Naive thymus-derived CD4-positive, alpha-beta T cell (primary cell): ENCODE measurements at regions of chr11 and their contacts with region 1.

Region 1: GRCh38 chr11:46121724-46122477 is 647 bp upstream of the PHF21A start:
- DNase-seq: peak in 7 of 9 donors; percentile 20 to 85 (median 80)
- ATAC-seq: peak; percentile 69
- H3K4me3 ChIP-seq: peak overlapping the region; percentile 53
- H3K4me3 Mint-ChIP-seq: peak overlapping the region; percentile 83 to 95 (median 93)
- H3K27ac ChIP-seq: peak overlapping the region; percentile 80
- H3K27ac Mint-ChIP-seq: peak overlapping the region; percentile 87 to 98 (median 95)
- H3K4me1 ChIP-seq: peaks cover 18 to 22% of the 10 kb centered on the region in 2 donors
- H3K4me1 Mint-ChIP-seq: peaks cover 24 to 39% (median 35%) of the 10 kb centered on the region in 7 donors
- H3K27me3 ChIP-seq: no peaks in the 10 kb centered on the region
- H3K27me3 Mint-ChIP-seq: no peaks in the 10 kb centered on the region

Region 2: GRCh38 chr11:45804761-45805304 is 317.1 kb before region 1 on chr11 and contains the start of gene SLC35C1:
- CTCF ChIA-PET with region 1: no interaction called
- POLR2A ChIA-PET with region 1: no interaction called
- intact Hi-C with region 1: loop called (anchors 2 to 10 kb)
- DNase-seq: peak; percentile 89 to 97 (median 93)
- ATAC-seq: peak; percentile 99
- H3K4me3 ChIP-seq: peak within 1 kb of the TSS; percentile 95
- H3K4me3 Mint-ChIP-seq: peak within 1 kb of the TSS; percentile 86 to 99 (median 92)
- H3K27ac ChIP-seq: peak within 1 kb of the TSS; percentile 87
- H3K27ac Mint-ChIP-seq: peak within 1 kb of the TSS; percentile 61 to 94 (median 91)
- H3K4me1 ChIP-seq: peaks cover 27 to 29% of the 10 kb centered on the region in 2 donors
- H3K4me1 Mint-ChIP-seq: peaks cover 31 to 43% (median 40%) of the 10 kb centered on the region in 7 donors
- H3K27me3 ChIP-seq: no peaks in the 10 kb centered on the region
- H3K27me3 Mint-ChIP-seq: no peaks in the 10 kb centered on the region
- total RNA-seq, gene SLC35C1: 7.9 to 22.8 (median 14.2) TPM

Region 3: DNA sequence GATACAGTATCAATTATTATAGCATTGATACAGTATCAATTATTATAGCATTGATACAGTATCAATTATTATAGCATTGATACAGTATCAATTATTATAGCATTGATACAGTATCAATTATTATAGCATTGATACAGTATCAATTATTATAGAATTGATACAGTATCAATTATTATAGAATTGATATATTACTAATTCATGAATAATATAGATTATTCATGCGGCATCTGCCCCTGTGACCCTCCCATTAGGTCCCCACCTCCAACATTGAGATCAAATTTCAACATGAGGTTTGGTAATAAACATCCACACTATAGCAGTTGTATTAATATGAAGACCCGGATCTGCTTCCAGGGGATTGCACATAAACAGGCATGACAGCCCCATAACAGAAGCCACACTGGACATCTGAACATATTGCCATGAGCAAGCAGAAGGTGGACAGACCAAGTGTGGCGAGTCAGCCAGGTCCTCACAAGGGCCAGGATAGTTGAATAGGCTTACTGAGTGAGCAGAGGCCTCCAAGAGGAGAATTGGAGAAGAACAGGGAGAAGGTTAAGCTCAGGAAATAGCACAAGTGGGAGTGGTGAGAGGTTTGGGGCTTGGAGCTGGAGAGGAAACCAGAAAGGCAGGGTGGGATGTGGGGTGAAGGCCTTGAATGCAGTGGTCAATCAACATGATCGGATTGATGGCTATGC is 306.3 kb before region 1 on chr11:
- CTCF ChIA-PET with region 1: no interaction called
- POLR2A ChIA-PET with region 1: no interaction called
- intact Hi-C with region 1: no loop called
- DNase-seq: no peak
- ATAC-seq: no peak
- H3K4me3 ChIP-seq: no peak overlapping the region
- H3K4me3 Mint-ChIP-seq: no peak overlapping the region
- H3K27ac ChIP-seq: no peak overlapping the region
- H3K27ac Mint-ChIP-seq: no peak overlapping the region
- H3K4me1 ChIP-seq: no peaks in the 10 kb centered on the region
- H3K4me1 Mint-ChIP-seq: peaks cover 0 to 4% (median 0%) of the 10 kb centered on the region in 7 donors
- H3K27me3 ChIP-seq: no peaks in the 10 kb centered on the region
- H3K27me3 Mint-ChIP-seq: peaks cover 0 to 4% (median 0%) of the 10 kb centered on the region in 5 donors

Region 4: DNA sequence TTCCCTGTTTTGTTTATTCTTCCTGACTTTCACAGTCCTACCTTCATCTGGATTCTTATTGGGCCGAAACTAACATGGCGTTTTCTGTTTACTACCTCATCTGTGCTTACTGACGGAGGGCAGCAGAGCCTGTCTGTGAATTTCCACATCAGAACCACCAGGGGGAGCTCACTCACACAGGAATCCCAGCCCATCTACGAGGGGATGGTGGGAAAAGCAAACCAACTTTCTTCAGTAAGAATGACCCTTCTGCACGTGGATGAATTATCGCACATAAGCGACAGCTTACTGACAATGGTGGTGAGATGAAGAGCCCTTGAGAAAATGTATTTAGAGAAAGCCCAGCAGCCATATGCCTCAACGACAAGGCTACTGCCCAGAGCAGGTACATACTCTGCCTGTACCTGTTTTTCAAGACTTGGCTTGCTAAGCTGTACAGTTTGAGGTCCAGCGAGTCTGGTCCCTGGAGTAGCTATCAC is 157.0 kb before region 1 on chr11:
- CTCF ChIA-PET with region 1: no interaction called
- POLR2A ChIA-PET with region 1: no interaction called
- intact Hi-C with region 1: loop called in 1 of 2 experiments (anchors 2 kb)
- DNase-seq: peak; percentile 11 to 68 (median 61)
- ATAC-seq: peak; percentile 96
- H3K4me3 ChIP-seq: no peak overlapping the region
- H3K4me3 Mint-ChIP-seq: no peak overlapping the region
- H3K27ac ChIP-seq: no peak overlapping the region
- H3K27ac Mint-ChIP-seq: no peak overlapping the region
- H3K4me1 ChIP-seq: no peaks in the 10 kb centered on the region
- H3K4me1 Mint-ChIP-seq: no peaks in the 10 kb centered on the region
- H3K27me3 ChIP-seq: no peaks in the 10 kb centered on the region
- H3K27me3 Mint-ChIP-seq: no peaks in the 10 kb centered on the region

Region 5: DNA sequence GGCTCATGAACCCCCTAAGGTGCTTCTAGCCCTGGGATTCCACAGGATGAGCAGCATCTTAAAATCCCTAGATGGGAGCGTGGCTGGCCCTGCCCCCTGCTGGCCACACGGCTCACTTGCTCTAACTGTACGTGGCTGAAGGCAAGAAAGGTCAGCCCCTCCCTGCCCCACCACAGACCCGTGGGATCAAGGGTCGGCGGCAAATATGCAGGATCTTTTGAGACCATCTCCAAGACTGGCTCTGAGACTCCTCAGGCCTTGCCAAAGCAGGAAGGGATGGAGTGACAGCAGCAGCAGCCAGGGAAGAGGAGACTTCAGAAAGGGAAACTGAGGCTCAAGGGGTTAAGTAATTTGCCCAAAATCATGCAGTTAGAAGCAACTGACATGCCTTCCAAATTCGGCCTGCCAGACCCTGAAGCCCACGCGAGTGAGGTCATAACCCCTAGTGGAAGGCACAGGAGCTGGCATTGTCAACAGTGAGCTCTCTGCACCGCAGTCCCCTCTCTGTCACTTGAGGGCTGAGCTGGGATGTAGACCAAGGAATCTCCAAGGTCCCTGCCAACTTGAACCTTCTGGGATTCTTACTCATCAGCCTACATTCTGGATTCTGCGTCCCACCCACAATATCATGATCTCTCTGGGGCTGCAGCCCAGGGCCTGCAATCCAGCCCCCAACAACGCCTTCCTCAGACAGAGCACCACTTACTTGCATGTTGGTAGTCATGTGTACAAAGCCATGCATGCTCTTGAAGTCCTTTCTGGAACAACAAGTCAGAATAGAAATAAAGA is 186.9 kb after region 1 on chr11:
- CTCF ChIA-PET with region 1: no interaction called
- POLR2A ChIA-PET with region 1: interaction called, 3 read pairs
- intact Hi-C with region 1: loop called (anchors 2 to 10 kb)
- DNase-seq: peak; percentile 29 to 66 (median 53)
- ATAC-seq: peak; percentile 78
- H3K4me3 ChIP-seq: no peak overlapping the region
- H3K4me3 Mint-ChIP-seq: peak overlapping the region in 2 of 10 donors; percentile 53 to 56
- H3K27ac ChIP-seq: no peak overlapping the region
- H3K27ac Mint-ChIP-seq: peak overlapping the region in 3 of 9 donors; percentile 38 to 56 (median 44)
- H3K4me1 ChIP-seq: peaks cover 0 to 5% of the 10 kb centered on the region in 2 donors
- H3K4me1 Mint-ChIP-seq: peaks cover 10 to 23% (median 19%) of the 10 kb centered on the region in 7 donors
- H3K27me3 ChIP-seq: no peaks in the 10 kb centered on the region
- H3K27me3 Mint-ChIP-seq: peaks cover 0 to 3% (median 0%) of the 10 kb centered on the region in 5 donors

Region 6: DNA sequence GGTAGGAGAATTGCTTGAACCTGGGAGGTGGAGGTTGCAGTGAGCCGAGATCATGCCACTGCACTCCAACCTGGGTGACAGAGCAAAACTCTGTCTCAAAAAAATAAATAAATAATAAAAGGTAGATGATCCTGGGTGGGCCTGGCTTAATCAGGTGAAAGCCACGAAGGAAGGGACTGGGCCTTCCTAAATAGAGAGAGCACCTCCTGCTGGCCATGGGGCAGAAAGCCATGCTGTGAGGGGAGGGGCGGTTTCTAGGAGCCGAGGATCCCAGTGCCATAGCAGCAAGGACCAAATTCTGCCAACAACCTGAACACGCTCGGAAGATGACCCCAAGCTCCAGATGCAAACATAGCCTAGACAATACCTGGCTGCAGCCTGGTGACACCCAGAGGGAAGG is 200.9 kb after region 1 on chr11:
- CTCF ChIA-PET with region 1: no interaction called
- POLR2A ChIA-PET with region 1: no interaction called
- intact Hi-C with region 1: no loop called
- DNase-seq: no peak
- ATAC-seq: no peak
- H3K4me3 ChIP-seq: no peak overlapping the region
- H3K4me3 Mint-ChIP-seq: no peak overlapping the region
- H3K27ac ChIP-seq: no peak overlapping the region
- H3K27ac Mint-ChIP-seq: peak overlapping the region in 1 of 9 donors; percentile 50
- H3K4me1 ChIP-seq: peaks cover 6 to 16% of the 10 kb centered on the region in 2 donors
- H3K4me1 Mint-ChIP-seq: peaks cover 21 to 66% (median 38%) of the 10 kb centered on the region in 7 donors
- H3K27me3 ChIP-seq: no peaks in the 10 kb centered on the region
- H3K27me3 Mint-ChIP-seq: peaks cover 0 to 13% (median 0%) of the 10 kb centered on the region in 5 donors

Region 7: DNA sequence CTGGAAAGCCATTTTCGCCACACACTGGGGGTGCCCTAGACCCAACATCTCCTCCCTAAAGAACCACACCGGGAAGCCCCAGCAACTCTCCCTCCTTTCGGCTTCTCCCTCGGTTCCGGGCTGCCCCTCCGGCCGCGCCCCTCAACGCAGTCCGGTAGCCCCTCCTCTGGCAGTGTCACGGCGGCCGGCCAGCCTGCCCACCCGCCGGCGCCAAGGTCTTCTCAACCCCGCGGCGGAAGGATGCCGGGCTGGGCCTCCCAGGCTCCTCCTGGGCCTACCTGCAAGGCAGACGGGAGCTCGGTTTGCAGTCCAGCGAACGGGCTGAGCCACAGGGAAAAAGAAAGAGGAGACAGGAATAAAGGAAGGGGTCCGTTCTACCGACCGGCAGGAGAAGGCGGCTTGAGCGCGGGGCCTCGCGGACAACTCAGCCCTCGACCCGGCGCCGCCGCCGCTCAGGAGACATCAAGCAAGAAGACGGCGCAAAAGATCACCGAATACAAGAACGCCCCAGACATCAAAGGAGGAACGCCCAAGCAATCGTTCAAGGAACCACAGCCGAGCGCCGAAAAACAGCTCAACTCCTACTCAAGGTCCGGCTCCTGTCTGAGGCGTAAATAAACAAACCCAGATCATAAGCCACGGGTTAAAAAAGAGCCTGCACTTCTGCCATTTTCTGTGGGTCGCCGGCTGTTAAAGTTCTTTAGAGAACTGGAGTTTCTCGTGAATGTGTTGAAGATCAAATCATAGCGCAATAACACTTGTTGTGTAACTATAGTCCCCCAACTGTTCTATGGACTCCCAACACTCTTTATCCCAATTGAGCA is 471.9 kb after region 1 on chr11 and contains the start of gene AMBRA1:
- CTCF ChIA-PET with region 1: no interaction called
- POLR2A ChIA-PET with region 1: no interaction called
- intact Hi-C with region 1: loop called in 1 of 2 experiments (anchors 5 kb)
- DNase-seq: peak; percentile 59 to 83 (median 80)
- ATAC-seq: peak; percentile 97
- H3K4me3 ChIP-seq: peak within 1 kb of the TSS; percentile 69
- H3K4me3 Mint-ChIP-seq: peak within 1 kb of the TSS; percentile 90 to 100 (median 97)
- H3K27ac ChIP-seq: peak within 1 kb of the TSS; percentile 84
- H3K27ac Mint-ChIP-seq: peak within 1 kb of the TSS; percentile 92 to 98 (median 96)
- H3K4me1 ChIP-seq: peaks cover 19 to 22% of the 10 kb centered on the region in 2 donors
- H3K4me1 Mint-ChIP-seq: peaks cover 23 to 49% (median 41%) of the 10 kb centered on the region in 7 donors
- H3K27me3 ChIP-seq: no peaks in the 10 kb centered on the region
- H3K27me3 Mint-ChIP-seq: no peaks in the 10 kb centered on the region
- total RNA-seq, gene AMBRA1: 38.1 to 48.7 (median 44.6) TPM